ENCODE measurements at regions of chr6 and their contacts with region 1.

Region 1: GRCh38 chr6:111793711-111794111 is 79.5 kb downstream of the FYN start:
- DNase-seq: no peak
- H3K4me3 Mint-ChIP-seq: peak overlapping the region; percentile 37
- H3K27ac Mint-ChIP-seq: peak overlapping the region; percentile 75
- H3K4me1 Mint-ChIP-seq: peaks cover 75% of the 10 kb centered on the region
- H3K27me3 Mint-ChIP-seq: no peaks in the 10 kb centered on the region

Region 2: DNA sequence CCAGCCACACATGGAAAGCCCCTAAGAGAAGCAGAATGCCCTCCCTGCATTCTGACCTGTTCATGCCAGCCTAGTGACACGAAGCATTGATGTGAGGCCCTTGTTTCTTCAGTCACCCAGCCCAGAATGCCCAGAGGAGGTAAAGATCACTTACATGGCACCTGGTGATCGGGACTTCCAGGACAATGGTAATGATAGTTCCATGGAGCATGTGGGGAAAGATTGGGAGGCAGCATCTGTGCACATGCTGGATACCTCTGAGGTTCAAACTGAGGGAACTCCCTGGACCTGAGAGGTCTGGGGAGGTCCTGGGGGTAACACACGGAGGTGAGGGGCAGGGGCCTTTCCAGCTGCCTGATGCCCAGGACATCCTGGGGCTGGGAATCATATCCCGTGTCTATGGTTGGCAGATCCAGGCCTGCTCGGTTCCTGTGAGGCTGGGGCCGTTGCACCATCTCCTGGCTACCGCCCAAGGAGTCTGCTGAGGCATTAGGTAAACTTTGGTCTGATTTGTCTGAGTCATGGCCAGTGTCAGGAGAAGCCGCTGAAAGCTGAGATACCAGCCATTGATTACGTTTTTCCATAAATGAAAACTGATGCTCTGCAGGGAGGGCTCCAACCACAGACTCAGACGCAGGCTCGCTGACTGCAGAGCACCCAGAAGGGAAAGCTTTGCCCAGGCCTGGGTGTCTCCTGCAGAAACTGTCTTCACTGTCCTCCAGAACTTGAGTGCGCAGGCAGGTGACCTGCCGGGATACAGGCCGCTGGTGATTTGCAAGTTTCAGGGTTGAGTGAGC is 202.4 kb before region 1 on chr6:
- intact Hi-C with region 1: no loop called
- DNase-seq: no peak
- H3K4me3 Mint-ChIP-seq: no peak overlapping the region
- H3K27ac Mint-ChIP-seq: no peak overlapping the region
- H3K4me1 Mint-ChIP-seq: peaks cover 28% of the 10 kb centered on the region
- H3K27me3 Mint-ChIP-seq: no peaks in the 10 kb centered on the region

Region 3: DNA sequence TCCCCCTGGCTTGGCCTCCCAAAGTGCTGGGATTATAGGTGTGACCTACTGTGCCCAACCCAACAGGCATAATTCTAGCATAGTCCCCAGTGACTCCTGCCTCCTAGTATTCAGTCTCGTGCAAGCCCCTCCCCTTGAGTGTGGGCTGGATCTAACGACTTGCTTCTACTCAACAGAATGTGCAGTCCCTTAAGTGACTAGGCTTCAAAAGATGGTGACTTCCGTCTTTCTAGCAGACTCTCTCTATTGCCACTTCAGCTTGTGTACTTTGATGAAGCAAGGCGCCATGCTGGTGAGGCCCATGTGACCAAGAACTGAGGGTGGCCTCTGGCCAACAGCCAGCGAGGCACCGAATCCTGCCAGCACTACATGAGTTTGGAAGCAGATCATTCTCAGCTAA is 78.4 kb before region 1 on chr6:
- intact Hi-C with region 1: loop called (anchors 2 kb)
- DNase-seq: peak; percentile 18
- H3K4me3 Mint-ChIP-seq: peak overlapping the region; percentile 55
- H3K27ac Mint-ChIP-seq: peak overlapping the region; percentile 96
- H3K4me1 Mint-ChIP-seq: peaks cover 85% of the 10 kb centered on the region
- H3K27me3 Mint-ChIP-seq: no peaks in the 10 kb centered on the region

Region 4: GRCh38 chr6:111769365-111770152 is 24.2 kb before region 1 on chr6:
- intact Hi-C with region 1: loop called (anchors 1 kb)
- DNase-seq: no peak
- H3K4me3 Mint-ChIP-seq: peak overlapping the region; percentile 40
- H3K27ac Mint-ChIP-seq: peak overlapping the region; percentile 86
- H3K4me1 Mint-ChIP-seq: peaks cover 84% of the 10 kb centered on the region
- H3K27me3 Mint-ChIP-seq: no peaks in the 10 kb centered on the region

Region 5: GRCh38 chr6:111777357-111777756 is 16.4 kb before region 1 on chr6:
- intact Hi-C with region 1: loop called (anchors 1 kb)
- DNase-seq: no peak
- H3K4me3 Mint-ChIP-seq: no peak overlapping the region
- H3K27ac Mint-ChIP-seq: peak overlapping the region; percentile 64
- H3K4me1 Mint-ChIP-seq: peaks cover 77% of the 10 kb centered on the region
- H3K27me3 Mint-ChIP-seq: no peaks in the 10 kb centered on the region